Activated CD4-positive, alpha-beta T cell treated with anti-CD3 and anti-CD28 coated beads for 36 hours (primary cell): ENCODE measurements at regions of chr17 and their contacts with region 1.

Region 1: GRCh38 chr17:63842540-63843386 is at the start of gene SMARCD2:
- DNase-seq: peak; percentile 100
- ATAC-seq: peak; percentile 89
- H3K4me3 Mint-ChIP-seq: peak within 1 kb of the TSS; percentile 98
- H3K27ac Mint-ChIP-seq: peak within 1 kb of the TSS; percentile 97
- H3K4me1 Mint-ChIP-seq: peaks cover 35% of the 10 kb centered on the region
- H3K27me3 Mint-ChIP-seq: no peaks in the 10 kb centered on the region
- total RNA-seq, gene SMARCD2: 100.0 to 101 TPM

Region 2: GRCh38 chr17:63425482-63425881 is 417.3 kb before region 1 on chr17:
- CTCF ChIA-PET with region 1: no interaction called
- POLR2A ChIA-PET with region 1: no interaction called
- intact Hi-C with region 1: loop called in 1 of 2 experiments (anchors 5 kb)
- DNase-seq: peak; percentile 82
- ATAC-seq: peak; percentile 93
- H3K4me3 Mint-ChIP-seq: no peak overlapping the region
- H3K27ac Mint-ChIP-seq: no peak overlapping the region
- H3K4me1 Mint-ChIP-seq: peaks cover 27% of the 10 kb centered on the region
- H3K27me3 Mint-ChIP-seq: no peaks in the 10 kb centered on the region

Region 3: DNA sequence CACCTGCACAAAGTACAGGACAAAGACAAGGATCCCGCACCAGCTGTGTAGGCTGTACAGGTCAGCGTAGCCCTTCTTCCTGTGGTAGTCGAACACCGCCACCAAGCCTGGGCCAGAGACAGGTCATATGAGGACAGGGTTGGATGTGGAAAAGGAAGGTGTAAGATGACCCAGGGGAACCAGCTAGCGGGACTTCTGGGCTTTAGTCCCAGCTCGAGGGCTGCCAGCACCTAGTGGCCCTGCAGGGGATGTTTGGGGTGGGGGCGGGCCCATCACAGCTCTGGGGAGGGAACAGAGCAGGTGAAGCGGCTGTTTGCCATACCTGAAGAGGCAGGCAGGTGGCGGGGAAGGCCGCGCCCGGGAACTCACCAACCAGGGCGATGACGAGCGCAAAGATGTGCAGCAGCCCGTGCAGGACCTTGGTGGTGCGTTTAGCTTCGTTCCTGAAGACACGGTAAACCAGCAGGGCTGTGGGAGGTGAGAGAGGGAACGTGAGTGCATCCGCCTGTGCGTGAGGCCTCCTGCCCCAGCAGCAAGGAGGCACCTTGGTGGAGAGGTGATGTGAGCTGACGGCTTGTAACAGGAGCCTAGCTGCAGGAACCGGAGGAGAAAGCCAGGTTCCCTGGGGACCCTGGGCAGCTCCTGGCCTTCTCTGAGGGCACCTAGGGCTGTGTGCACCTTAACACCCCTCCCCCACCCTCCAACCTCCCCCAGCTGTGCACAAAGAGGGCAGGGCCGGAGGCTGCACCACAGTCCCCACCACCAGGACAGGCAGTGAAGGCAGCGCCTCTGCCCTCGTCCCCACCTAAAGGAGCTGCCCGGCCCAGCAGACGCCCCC is 406.9 kb before region 1 on chr17:
- CTCF ChIA-PET with region 1: no interaction called
- POLR2A ChIA-PET with region 1: no interaction called
- intact Hi-C with region 1: no loop called
- DNase-seq: no peak
- ATAC-seq: no peak
- H3K4me3 Mint-ChIP-seq: no peak overlapping the region
- H3K27ac Mint-ChIP-seq: no peak overlapping the region
- H3K4me1 Mint-ChIP-seq: peaks cover 23% of the 10 kb centered on the region
- H3K27me3 Mint-ChIP-seq: no peaks in the 10 kb centered on the region

Region 4: DNA sequence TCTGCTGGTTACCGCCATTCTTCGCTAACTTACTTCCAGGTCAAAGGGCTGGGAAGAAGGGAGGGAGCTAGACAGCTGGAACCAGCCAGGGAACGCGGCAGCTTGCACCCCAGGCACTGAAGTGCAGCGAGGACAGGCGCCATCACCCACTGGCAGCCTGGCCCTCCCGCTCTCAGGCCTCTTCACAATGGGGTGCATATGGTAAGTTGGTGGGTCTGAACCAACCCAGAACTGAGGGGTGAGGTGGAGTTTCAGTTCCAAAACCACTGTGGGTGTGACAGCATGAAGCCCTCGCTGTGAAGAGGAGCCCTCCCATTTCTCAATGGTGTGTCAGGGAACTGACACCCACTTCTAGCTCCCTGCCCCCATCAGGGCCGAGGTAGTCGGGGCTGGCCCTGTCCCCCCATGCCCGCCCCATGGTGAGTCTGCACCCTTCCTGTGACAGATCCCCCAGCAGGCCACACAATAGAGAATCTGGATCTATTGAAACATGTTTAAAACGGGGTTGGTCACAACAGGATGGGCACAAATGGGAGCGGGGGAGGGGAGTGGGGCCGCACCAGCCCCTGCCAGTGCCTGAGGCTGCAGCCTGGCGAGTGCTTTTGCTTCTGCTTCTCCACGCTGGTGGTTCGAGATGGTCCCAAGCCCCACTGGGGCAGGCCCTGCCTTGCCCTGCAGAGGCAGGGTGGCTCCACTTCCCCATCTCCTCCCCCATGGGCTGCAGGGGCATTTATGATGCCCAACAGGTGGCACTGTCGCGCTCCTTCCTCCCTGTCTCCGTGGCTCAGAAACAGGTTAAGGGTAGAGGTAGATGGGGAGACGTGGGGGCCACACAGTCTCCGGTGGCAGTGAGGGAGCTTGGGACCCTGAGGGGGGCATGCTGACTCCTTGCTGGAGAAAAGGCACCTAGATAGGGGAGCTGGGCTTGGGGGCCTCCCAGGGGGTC is 145.1 kb before region 1 on chr17:
- CTCF ChIA-PET with region 1: interaction called, 5 read pairs
- POLR2A ChIA-PET with region 1: interaction called, 3 read pairs
- intact Hi-C with region 1: loop called (anchors 1 to 5 kb)
- DNase-seq: peak; percentile 90
- ATAC-seq: peak; percentile 42
- H3K4me3 Mint-ChIP-seq: peak overlapping the region; percentile 79
- H3K27ac Mint-ChIP-seq: peak overlapping the region; percentile 88
- H3K4me1 Mint-ChIP-seq: peaks cover 64% of the 10 kb centered on the region
- H3K27me3 Mint-ChIP-seq: no peaks in the 10 kb centered on the region

Region 5: GRCh38 chr17:63827002-63827771 is 15.6 kb before region 1 on chr17 and contains the starts of genes FTSJ3 and PSMC5:
- CTCF ChIA-PET with region 1: interaction called, 6 read pairs
- POLR2A ChIA-PET with region 1: interaction called, 20 read pairs
- intact Hi-C with region 1: loop called (anchors 1 kb)
- DNase-seq: peak; percentile 97
- ATAC-seq: peak; percentile 94
- H3K4me3 Mint-ChIP-seq: peak within 1 kb of the TSS; percentile 88
- H3K27ac Mint-ChIP-seq: peak within 1 kb of the TSS; percentile 99
- H3K4me1 Mint-ChIP-seq: peaks cover 72% of the 10 kb centered on the region
- H3K27me3 Mint-ChIP-seq: no peaks in the 10 kb centered on the region
- total RNA-seq, gene FTSJ3: 52.1 to 61.2 TPM
- total RNA-seq, gene PSMC5: 98.2 to 160 TPM

Region 6: DNA sequence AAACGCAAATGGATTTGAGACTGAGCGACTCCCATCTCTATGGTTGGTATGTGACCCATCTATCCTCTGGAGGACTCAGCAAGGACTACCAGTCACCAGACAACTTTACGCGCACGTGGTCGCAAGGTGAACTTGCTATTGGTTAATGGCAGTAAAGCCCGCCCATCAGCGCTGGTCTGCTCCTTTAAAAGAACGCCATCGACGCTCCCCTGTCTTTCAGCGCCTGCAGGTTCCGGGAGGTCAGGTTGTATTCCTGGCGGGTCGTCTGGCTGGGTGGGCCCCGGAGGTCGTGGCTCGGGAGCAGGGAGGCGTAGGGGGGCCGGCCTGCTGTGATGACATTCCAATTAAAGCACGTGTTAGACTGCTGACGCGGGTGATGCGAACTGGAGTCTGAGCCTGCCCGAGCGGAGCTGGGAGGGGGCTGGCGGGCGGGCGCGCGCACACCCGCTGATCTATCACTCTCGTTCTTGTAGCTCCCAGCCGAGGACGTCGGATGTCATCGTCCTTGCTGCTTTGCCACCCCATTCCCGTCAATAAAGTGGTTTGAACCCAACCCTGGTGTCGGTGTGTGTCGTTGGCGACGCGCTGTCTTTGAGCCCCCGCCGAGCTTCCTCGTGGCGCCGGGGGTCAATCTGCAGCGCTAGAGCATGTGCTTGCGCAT is 303.1 kb after region 1 on chr17:
- CTCF ChIA-PET with region 1: no interaction called
- POLR2A ChIA-PET with region 1: interaction called, 3 read pairs
- intact Hi-C with region 1: loop called in 1 of 2 experiments (anchors 1 kb)
- DNase-seq: peak; percentile 97
- ATAC-seq: peak; percentile 96
- H3K4me3 Mint-ChIP-seq: no peak overlapping the region
- H3K27ac Mint-ChIP-seq: no peak overlapping the region
- H3K4me1 Mint-ChIP-seq: peaks cover 24% of the 10 kb centered on the region
- H3K27me3 Mint-ChIP-seq: no peaks in the 10 kb centered on the region

Region 7: GRCh38 chr17:64506576-64507477 is 664.1 kb after region 1 on chr17 and contains the start of gene CEP95:
- CTCF ChIA-PET with region 1: no interaction called
- POLR2A ChIA-PET with region 1: no interaction called
- intact Hi-C with region 1: loop called in 1 of 2 experiments (anchors 1 kb)
- DNase-seq: peak; percentile 97
- ATAC-seq: peak; percentile 56
- H3K4me3 Mint-ChIP-seq: peak within 1 kb of the TSS; percentile 100
- H3K27ac Mint-ChIP-seq: peak within 1 kb of the TSS; percentile 100
- H3K4me1 Mint-ChIP-seq: peaks cover 48% of the 10 kb centered on the region
- H3K27me3 Mint-ChIP-seq: no peaks in the 10 kb centered on the region
- total RNA-seq, gene CEP95: 40.5 to 42.8 TPM